ENCODE measurements at regions of chr10 and their contacts with region 1.

Region 1: DNA sequence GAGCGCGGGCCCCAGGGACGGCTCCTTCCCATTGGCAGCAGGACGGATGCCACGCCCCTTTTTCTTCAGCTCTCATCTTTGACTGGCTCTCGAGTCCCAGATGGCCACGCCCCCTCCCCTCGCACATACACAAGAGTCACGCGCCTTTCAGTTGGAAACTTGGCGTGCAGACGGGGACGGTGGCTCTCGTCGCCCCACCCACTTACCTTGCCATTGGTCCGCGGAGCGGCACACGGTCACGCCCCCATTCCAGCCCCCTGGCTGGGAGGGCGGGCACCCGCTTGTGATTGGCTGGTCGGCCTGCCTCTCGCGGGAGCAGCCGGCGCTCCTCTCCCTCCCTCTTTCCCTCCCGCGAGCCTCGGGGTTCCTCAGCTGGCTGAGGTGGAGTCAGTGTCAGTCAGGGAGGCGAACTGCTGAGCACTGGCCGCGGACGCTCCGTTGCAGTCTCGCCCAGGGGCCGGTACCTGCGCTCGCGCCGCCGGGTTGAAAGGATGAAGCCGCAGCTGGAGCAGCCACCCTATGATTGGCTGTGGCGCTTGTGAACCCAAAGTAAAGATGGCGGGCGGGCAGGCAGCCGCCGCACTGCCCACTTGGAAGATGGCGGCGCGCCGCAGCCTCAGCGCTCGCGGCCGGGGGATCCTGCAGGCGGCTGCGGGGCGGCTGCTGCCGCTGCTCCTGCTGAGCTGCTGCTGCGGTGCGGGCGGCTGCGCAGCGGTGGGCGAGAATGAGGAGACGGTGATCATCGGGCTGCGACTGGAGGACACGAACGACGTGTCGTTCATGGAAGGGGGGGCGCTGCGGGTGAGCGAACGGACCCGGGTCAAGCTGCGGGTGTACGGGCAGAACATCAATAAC is at the start of gene CNNM2:
- DNase-seq: peak; percentile 100
- ATAC-seq: peak; percentile 93
- H3K4me3 Mint-ChIP-seq: peak within 1 kb of the TSS; percentile 86
- H3K27ac Mint-ChIP-seq: peak within 1 kb of the TSS; percentile 93
- H3K4me1 Mint-ChIP-seq: peaks cover 49% of the 10 kb centered on the region
- H3K27me3 Mint-ChIP-seq: peaks cover 12% of the 10 kb centered on the region
- CTCF ChIP-seq: no peak
- total RNA-seq, gene CNNM2: 5.1 to 5.2 TPM

Region 2: GRCh38 chr10:102641880-102642735 is 276.1 kb before region 1 on chr10:
- CTCF ChIA-PET with region 1: no interaction called
- POLR2A ChIA-PET with region 1: no interaction called
- intact Hi-C with region 1: no loop called
- DNase-seq: peak; percentile 99
- ATAC-seq: peak; percentile 67
- H3K4me3 Mint-ChIP-seq: peak overlapping the region; percentile 85
- H3K27ac Mint-ChIP-seq: peak overlapping the region; percentile 91
- H3K4me1 Mint-ChIP-seq: peaks cover 17% of the 10 kb centered on the region
- H3K27me3 Mint-ChIP-seq: no peaks in the 10 kb centered on the region
- CTCF ChIP-seq: no peak

Region 3: DNA sequence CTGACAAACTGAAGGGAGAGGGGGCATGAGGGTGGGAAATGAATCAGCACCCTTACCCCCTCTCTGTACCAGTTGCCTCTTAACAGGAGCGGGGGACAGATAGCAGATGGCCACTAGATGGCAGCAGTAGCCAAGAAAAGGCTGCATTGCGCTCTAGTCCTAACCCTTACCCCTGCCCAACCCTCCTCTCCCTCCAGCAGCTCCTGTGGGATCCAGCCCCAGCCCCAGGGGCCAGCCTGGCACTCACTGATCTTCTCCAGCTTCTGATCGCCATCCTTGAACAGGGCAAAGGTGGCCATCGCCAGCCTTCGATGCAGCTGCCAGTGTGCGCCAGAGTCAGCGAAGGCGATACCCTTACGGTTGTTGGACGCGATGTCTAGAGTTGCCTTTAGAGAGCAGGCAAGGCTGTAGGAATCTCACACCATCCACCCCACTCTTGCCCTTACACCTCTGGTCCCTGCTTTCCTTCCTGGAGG is 83.1 kb before region 1 on chr10:
- CTCF ChIA-PET with region 1: interaction called, 11 read pairs
- POLR2A ChIA-PET with region 1: no interaction called
- intact Hi-C with region 1: no loop called
- DNase-seq: peak; percentile 85
- ATAC-seq: peak; percentile 97
- H3K4me3 Mint-ChIP-seq: no peak overlapping the region
- H3K27ac Mint-ChIP-seq: no peak overlapping the region
- H3K4me1 Mint-ChIP-seq: peaks cover 3% of the 10 kb centered on the region
- H3K27me3 Mint-ChIP-seq: no peaks in the 10 kb centered on the region
- CTCF ChIP-seq: peak; percentile 89

Region 4: GRCh38 chr10:102845352-102845902 is 72.8 kb before region 1 on chr10:
- CTCF ChIA-PET with region 1: no interaction called
- POLR2A ChIA-PET with region 1: no interaction called
- intact Hi-C with region 1: no loop called
- DNase-seq: no peak
- ATAC-seq: no peak
- H3K4me3 Mint-ChIP-seq: no peak overlapping the region
- H3K27ac Mint-ChIP-seq: no peak overlapping the region
- H3K4me1 Mint-ChIP-seq: no peaks in the 10 kb centered on the region
- H3K27me3 Mint-ChIP-seq: no peaks in the 10 kb centered on the region
- CTCF ChIP-seq: no peak

Region 5: DNA sequence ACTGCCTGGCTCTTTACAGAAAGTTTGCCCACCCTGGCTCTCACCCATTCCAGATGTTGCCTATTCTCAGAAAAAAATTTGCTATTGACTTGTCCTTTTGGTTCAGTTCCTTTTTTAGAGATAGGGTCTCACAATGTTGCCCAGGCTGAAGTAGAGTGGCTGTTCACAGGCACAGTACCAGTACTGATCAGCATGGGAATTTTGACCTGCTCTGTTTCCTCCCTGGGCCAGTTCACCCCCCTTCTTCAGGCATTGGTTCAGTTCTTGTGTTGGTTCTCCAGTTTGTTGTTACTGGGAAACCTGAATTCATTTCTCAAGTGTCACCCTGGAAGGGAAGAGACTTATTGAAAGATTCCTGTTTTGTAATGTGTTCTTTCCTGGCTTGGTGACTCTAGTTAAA is 52.3 kb after region 1 on chr10:
- CTCF ChIA-PET with region 1: no interaction called
- POLR2A ChIA-PET with region 1: no interaction called
- intact Hi-C with region 1: no loop called
- DNase-seq: no peak
- ATAC-seq: no peak
- H3K4me3 Mint-ChIP-seq: no peak overlapping the region
- H3K27ac Mint-ChIP-seq: no peak overlapping the region
- H3K4me1 Mint-ChIP-seq: peaks cover 4% of the 10 kb centered on the region
- H3K27me3 Mint-ChIP-seq: no peaks in the 10 kb centered on the region
- CTCF ChIP-seq: no peak

Region 6: DNA sequence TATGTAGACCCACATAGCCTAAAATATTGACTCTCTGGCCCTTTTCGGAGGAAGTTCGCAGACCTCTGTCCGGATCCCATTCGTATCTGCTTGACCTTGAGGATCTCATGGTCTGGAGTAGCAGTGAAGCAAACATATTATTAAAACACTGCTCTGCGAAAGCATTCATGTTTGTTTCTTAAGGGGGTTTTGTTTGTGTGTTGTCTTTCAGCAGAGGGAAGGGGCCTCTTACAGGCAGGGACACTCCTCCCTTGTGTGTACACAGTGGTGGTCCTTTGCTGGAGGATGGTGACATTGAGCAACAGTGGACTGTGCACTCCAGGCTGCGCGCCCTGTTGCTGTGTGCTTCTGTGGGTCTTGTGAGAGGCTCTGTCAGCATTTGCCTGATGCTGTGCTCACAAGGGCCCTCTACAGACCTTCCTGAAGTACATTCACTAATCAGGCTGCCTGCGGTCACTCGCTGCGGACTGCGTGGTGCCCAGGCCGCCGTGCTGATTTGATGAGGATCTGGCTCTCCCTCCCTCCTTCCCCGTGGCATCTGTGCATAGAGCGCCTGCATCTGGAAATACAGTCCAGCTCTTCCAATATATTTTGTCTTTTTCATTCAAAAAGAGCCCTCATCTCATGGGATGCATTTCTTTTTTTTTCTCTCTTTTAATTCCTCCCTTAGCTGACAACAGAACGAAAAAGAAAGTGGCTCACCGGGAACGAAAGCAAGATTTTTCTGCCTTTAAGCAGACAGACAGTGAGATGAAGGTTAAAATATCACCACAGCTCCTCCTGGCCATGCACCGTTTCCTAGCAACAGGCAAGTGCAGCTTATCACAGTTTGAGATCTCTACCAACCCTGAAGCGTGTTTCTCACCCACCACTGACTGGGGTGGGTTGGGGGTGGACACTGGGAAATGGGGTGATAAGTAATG is 135.7 kb after region 1 on chr10:
- CTCF ChIA-PET with region 1: interaction called, 45 read pairs
- POLR2A ChIA-PET with region 1: interaction called, 5 read pairs
- intact Hi-C with region 1: no loop called
- DNase-seq: peak; percentile 75
- ATAC-seq: peak; percentile 91
- H3K4me3 Mint-ChIP-seq: peak overlapping the region; percentile 79
- H3K27ac Mint-ChIP-seq: peak overlapping the region; percentile 85
- H3K4me1 Mint-ChIP-seq: peaks cover 18% of the 10 kb centered on the region
- H3K27me3 Mint-ChIP-seq: no peaks in the 10 kb centered on the region
- CTCF ChIP-seq: no peak

Region 7: GRCh38 chr10:103077491-103078308 is 159.5 kb after region 1 on chr10:
- CTCF ChIA-PET with region 1: interaction called, 19 read pairs
- POLR2A ChIA-PET with region 1: interaction called, 4 read pairs
- intact Hi-C with region 1: no loop called
- DNase-seq: no peak
- ATAC-seq: no peak
- H3K4me3 Mint-ChIP-seq: no peak overlapping the region
- H3K27ac Mint-ChIP-seq: no peak overlapping the region
- H3K4me1 Mint-ChIP-seq: no peaks in the 10 kb centered on the region
- H3K27me3 Mint-ChIP-seq: no peaks in the 10 kb centered on the region
- CTCF ChIP-seq: no peak

Region 8: DNA sequence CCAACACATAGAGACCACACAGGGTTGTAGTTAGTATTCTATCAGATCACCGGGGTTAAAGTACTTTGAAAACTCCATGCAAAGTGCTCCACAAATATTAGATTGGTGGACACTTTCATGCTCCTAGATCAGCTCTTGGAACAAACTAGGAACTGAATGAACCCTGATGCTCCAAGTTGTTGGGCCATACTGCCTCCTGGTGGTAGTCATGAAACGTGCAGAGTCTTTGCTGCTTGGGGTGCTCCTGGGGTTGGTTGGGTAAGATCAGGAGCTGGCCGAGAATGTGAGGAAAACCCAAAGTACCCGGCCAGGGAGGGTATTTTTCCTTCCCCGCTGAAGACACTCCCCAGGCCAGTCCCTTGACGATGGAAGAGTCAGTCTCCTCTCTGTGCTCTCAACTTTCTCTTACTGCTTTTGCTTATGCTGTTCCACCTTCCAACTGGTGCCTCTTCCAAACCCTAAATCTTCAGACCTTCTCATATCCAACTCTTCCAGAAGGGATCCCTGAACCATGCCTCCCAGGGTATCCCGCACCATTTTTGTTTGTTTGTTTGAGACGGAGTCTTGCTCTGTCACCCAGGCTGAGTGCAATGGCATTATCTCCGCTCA is 326.6 kb after region 1 on chr10:
- CTCF ChIA-PET with region 1: interaction called, 26 read pairs
- POLR2A ChIA-PET with region 1: no interaction called
- intact Hi-C with region 1: loop called (anchors 10 kb)
- DNase-seq: peak; percentile 75
- ATAC-seq: peak; percentile 88
- H3K4me3 Mint-ChIP-seq: no peak overlapping the region
- H3K27ac Mint-ChIP-seq: no peak overlapping the region
- H3K4me1 Mint-ChIP-seq: peaks cover 8% of the 10 kb centered on the region
- H3K27me3 Mint-ChIP-seq: no peaks in the 10 kb centered on the region
- CTCF ChIP-seq: peak; percentile 84

Measured in activated CD8-positive, alpha-beta T cell treated with anti-CD3 and anti-CD28 coated beads for 36 hours (primary cell).